Breast epithelium (tissue), 4 donors: ENCODE measurements at regions of chr5 and their contacts with region 1.

Region 1: DNA sequence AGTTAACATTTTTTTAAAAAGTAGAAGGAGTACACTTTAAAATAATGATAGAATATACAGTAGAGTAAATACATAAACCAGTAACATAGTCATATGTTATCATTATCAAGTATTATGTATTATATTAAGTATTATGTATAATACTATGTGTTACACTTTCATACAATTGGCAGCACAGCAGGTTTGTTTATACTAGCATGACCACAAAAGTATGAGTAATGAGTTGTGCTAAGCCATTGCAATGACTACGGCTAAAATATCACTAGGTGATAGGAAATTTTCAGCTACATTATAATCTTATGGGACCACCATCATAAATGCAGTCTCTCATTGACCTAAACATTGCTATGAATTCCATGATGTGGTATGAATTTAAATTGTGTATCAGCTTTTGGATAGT is 506.0 kb downstream of the HTR1A start:
- DNase-seq: no peak
- H3K4me3 ChIP-seq: no peak overlapping the region
- H3K27ac ChIP-seq: no peak overlapping the region
- H3K4me1 ChIP-seq: no peaks in the 10 kb centered on the region
- H3K27me3 ChIP-seq: no peaks in the 10 kb centered on the region
- CTCF ChIP-seq: no peak
- POLR2A ChIP-seq: no peak

Region 2: DNA sequence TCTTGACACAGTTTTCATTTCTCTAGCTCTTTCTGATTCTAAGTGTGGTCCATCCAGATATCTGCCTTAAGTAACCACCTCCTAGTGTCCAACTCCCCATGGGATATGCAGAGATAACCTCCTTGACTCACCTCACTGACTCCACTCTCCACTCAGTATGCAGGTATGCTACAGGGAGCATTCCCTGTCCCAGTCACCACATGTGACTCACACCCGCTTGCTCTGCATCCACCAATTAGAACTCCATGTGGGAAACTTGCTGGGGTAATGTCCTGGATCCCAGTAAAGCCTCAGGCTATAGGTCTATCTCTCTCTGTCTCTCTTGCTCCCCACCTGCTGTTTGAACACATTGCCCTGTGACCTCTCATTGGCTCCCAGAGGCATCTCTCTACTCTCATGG is 57.9 kb before region 1 on chr5:
- intact Hi-C with region 1: loop called (anchors 2 kb)
- DNase-seq: no peak
- H3K4me3 ChIP-seq: no peak overlapping the region
- H3K27ac ChIP-seq: no peak overlapping the region
- H3K4me1 ChIP-seq: no peaks in the 10 kb centered on the region
- H3K27me3 ChIP-seq: no peaks in the 10 kb centered on the region
- CTCF ChIP-seq: no peak
- POLR2A ChIP-seq: no peak